ENCODE measurements at regions of chr16 and their contacts with region 1.

Region 1: GRCh38 chr16:70430667-70431536 is 8.0 kb downstream of the ST3GAL2 start:
- DNase-seq: peak; percentile 94
- H3K4me3 ChIP-seq: peak overlapping the region; percentile 59
- H3K27ac ChIP-seq: peak overlapping the region; percentile 100
- H3K4me1 ChIP-seq: peaks cover 78% of the 10 kb centered on the region
- CTCF ChIP-seq: no peak

Region 2: GRCh38 chr16:70251629-70252354 is 179.1 kb before region 1 on chr16 and contains the start of gene EXOSC6:
- CTCF ChIA-PET with region 1: no interaction called
- POLR2A ChIA-PET with region 1: no interaction called
- intact Hi-C with region 1: no loop called
- DNase-seq: peak; percentile 97
- H3K4me3 ChIP-seq: peak within 1 kb of the TSS; percentile 91
- H3K27ac ChIP-seq: peak within 1 kb of the TSS; percentile 87
- H3K4me1 ChIP-seq: peaks cover 11% of the 10 kb centered on the region
- CTCF ChIP-seq: peak; percentile 85
- total RNA-seq, gene EXOSC6: 30.8 and 36.8 TPM in 2 replicates

Region 3: DNA sequence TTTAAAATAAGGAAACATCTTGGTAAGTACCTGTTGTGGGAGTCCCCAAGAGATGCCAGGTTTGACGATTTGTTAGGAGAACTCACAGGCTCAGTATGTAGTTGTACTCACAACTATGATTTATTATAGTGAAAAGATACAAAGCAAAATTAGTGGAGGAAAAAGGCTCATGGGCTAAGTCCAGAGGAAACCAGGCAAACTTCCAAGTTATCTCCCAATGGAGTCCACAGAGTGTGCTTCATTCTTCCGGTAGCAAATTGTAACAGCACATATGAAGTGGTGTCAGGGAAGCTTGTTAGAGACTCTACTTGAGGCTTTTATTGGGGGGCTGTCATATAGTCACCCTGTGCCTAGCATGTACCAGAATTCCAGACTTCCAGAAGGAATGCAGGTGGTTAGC is 81.9 kb before region 1 on chr16:
- CTCF ChIA-PET with region 1: no interaction called
- POLR2A ChIA-PET with region 1: no interaction called
- intact Hi-C with region 1: no loop called
- DNase-seq: no peak
- H3K4me3 ChIP-seq: no peak overlapping the region
- H3K27ac ChIP-seq: no peak overlapping the region
- H3K4me1 ChIP-seq: peaks cover 17% of the 10 kb centered on the region
- CTCF ChIP-seq: no peak

Region 4: DNA sequence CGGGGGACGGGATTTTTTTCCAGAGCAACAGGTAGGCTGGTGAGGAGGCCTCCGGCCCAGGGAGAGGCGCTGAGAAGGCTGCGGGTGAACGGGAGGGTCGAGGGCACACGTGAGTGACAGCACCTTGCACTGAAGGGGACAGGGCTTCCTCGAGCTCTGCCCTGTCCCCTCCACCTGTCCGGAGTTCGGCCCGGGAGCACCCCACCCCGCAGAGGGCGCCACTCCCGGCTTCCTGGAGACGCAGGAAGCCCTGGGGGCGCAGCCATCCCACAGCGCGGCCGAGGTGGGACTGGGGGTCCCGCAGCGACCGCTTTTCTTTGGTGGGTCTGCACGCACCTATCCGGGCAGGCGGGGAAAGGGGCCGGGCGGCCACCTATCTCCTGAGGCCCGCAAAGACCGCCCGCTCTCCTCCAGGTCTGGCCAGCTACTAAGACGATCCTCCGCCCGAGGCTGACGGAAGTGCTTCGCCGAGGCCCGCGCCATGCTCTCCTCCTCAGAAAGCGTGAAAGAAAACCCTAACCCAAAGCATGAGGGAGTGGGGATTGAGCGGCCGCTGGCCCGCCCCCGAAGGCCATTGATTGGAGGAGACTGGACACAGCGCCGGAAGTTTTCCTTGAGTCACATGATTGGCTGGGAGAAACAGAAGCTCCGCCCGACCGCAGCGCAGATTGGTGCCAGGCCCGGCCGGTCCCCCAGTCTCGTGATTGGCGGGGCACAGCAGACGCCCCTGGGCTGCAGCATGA is 49.9 kb before region 1 on chr16:
- CTCF ChIA-PET with region 1: no interaction called
- POLR2A ChIA-PET with region 1: interaction called, 6 read pairs
- intact Hi-C with region 1: loop called (anchors 1 kb)
- DNase-seq: peak; percentile 98
- H3K4me3 ChIP-seq: peak overlapping the region; percentile 89
- H3K27ac ChIP-seq: peak overlapping the region; percentile 84
- H3K4me1 ChIP-seq: peaks cover 17% of the 10 kb centered on the region
- CTCF ChIP-seq: peak; percentile 71

Region 5: DNA sequence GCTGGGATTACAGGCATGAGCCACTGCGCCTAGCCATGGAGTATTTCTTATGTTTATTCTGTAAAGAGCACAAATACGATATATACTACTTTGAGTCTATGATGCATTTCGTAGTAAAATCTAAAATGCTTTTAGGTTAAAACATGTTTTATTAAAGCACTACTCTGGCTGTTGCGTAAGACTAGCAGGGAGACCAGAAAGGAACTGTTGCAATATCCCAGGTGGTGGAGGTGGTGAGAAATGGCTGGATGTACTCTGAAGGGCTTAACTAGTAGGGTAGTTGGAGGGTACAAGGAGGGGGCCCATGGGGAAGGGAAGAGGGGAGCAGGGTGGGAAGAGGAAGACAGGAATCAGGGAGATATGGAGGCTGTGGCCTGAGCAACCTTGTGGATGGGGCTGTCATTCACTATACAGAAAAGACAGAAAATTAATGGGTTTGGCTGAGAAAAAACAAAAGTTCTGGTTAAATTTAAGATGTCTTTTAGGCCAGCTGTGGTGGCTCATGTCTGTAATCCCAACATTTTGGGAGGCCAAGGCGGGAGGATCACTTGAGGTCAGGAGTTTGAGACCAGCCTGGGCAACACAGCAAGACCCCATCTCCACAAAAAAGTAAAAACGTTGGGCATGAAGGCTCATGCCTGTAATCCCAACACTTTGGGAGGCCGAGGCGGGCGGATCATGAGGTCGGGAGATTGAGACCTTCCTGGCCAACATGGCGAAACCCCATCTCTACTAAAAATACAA is 27.8 kb before region 1 on chr16:
- CTCF ChIA-PET with region 1: interaction called, 4 read pairs
- POLR2A ChIA-PET with region 1: interaction called, 10 read pairs
- intact Hi-C with region 1: loop called (anchors 1 kb)
- DNase-seq: no peak
- H3K4me3 ChIP-seq: no peak overlapping the region
- H3K27ac ChIP-seq: peak overlapping the region; percentile 96
- H3K4me1 ChIP-seq: peaks cover 72% of the 10 kb centered on the region
- CTCF ChIP-seq: no peak

Region 6: DNA sequence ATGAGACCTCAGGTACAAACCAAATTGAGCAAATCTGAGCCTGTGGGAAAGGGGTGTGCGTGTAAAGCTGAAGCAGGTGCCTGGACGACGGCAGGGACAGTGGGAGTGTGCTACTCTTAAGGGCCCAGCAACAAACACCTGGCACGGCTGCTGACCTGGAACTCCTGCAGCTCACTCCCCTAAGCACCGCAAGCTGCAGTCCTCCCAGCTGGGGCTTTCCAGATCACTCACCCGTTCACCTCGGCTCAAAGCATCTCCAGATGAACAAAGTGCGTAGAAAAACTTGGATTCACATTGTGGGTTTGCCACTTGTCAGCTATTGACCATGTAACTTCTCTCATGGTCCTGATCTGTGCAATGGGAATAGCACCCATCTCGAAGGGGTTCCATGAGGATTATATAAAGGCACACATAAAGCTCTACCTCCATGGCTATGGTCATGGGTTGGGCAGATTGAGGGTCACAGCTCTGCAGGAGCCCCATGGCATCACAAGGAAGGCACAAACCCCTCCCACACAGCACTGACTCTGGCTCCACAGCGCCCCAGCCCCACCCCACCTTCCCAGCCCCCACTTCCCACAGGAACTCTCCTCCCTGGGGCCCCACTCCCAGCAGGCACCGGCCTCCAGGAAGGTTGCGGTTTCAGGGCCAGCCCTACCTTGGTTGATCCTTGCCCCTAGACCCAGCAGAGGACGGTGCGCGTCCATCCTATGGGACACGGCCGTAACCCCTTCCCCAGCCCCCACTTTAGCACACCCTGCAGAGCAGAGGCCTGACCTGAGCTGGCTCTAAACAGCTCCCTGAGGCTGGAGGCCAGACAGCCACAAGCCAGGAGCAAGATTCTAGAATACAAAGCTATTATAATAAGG is 13.9 kb before region 1 on chr16:
- CTCF ChIA-PET with region 1: interaction called, 3 read pairs
- POLR2A ChIA-PET with region 1: interaction called, 16 read pairs
- intact Hi-C with region 1: loop called (anchors 2 kb)
- DNase-seq: peak; percentile 73
- H3K4me3 ChIP-seq: peak overlapping the region; percentile 15
- H3K27ac ChIP-seq: peak overlapping the region; percentile 73
- H3K4me1 ChIP-seq: peaks cover 57% of the 10 kb centered on the region
- CTCF ChIP-seq: no peak

Region 7: DNA sequence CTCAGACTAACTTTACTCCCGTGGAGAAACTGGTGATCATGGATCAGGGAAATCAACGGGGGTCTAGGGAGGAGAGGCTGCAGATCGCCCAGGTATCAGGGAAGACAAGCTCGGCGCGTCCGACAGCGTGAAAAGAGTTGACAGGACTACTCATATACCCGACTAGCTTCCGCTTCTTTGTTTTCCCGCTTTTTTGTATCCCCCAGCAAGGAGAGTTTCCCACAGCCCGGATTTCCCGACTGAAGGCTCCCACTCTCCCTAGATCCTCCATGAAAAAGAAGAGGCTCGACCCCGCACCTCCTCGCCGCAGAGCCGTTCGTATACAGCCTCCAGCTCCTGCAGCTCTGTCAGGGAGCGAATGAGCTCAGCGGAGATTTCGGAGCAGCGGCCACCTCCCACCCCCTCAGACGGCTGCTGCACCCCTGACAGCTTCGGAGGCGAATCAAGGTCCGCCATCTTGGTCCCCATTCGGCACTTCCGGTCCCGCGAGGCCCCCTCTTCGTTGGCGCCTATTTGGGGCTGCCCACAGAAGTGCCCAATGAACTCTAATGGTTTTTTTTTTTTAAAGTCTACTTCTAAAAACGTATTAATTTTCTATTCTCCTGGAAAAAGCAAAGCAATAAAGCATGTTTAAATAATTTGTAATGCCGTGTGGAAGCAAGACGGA is 92.3 kb after region 1 on chr16 and contains the start of gene COG4:
- CTCF ChIA-PET with region 1: no interaction called
- POLR2A ChIA-PET with region 1: no interaction called
- intact Hi-C with region 1: loop called (anchors 2 kb)
- DNase-seq: peak; percentile 95
- H3K4me3 ChIP-seq: peak within 1 kb of the TSS; percentile 99
- H3K27ac ChIP-seq: peak within 1 kb of the TSS; percentile 88
- H3K4me1 ChIP-seq: peaks cover 47% of the 10 kb centered on the region
- CTCF ChIP-seq: no peak
- total RNA-seq, gene COG4: 41.9 and 48.8 TPM in 2 replicates

Region 8: DNA sequence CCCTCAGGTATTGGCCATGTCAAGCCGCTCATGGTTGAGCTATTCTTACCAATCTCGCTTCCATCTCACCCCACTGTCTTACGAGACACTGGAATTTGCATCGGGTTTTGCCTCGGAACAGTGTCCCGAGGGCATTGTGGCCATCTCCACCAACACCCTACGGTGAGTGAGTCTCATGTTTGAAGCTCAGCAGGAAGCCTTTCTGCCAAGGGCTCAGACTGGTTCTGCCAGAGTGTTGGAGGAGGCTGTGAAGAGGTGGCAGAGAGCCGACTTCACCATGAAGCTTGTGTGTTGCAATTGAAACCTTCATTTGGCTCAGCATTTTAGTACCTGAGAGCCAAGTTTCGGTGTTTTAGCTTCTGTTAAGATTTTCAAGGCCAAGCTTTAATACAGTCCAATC is 130.7 kb after region 1 on chr16:
- CTCF ChIA-PET with region 1: no interaction called
- POLR2A ChIA-PET with region 1: no interaction called
- intact Hi-C with region 1: no loop called
- DNase-seq: no peak
- H3K4me3 ChIP-seq: no peak overlapping the region
- H3K27ac ChIP-seq: no peak overlapping the region
- H3K4me1 ChIP-seq: no peaks in the 10 kb centered on the region
- CTCF ChIP-seq: no peak